T-cell (primary cell): ENCODE measurements at regions of chr1 and their contacts with region 1.

Region 1: DNA sequence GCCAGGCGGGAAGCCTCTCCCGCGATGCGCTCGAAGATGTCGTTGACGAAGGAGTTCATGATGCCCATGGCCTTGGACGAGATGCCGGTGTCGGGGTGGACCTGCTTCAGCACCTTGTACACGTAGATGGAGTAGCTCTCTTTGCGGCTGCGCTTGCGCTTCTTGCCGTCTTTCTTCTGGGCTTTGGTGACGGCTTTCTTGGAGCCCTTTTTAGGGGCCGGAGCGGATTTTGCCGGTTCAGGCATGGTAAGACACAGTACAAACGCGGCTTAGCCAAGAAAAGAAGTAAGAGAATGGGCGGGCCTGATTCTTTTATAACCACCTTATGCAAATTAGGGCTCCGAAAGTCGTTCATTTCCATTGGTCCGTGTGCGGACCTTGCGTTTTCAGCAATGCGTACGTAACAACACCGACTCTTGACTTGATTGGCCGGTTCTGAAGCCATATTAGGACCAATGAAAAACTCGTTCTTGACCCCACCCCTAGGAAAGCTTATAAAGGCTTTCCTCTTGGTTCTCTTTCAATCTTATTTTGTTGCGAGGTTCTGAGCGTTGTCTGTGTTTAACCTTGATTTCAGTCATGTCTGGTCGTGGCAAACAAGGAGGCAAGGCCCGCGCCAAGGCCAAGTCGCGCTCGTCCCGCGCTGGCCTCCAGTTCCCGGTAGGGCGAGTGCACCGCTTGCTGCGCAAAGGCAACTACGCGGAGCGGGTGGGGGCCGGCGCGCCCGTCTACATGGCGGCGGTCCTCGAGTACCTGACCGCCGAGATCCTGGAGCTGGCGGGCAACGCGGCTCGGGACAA is 12.8 kb upstream of the BOLA1 start:
- DNase-seq: peak; percentile 65 to 97 (median 86)
- ATAC-seq: peak; percentile 69 to 76 (median 74)
- H3K4me3 ChIP-seq: peak overlapping the region; percentile 78 to 94
- H3K4me3 Mint-ChIP-seq: no peak overlapping the region
- H3K27ac ChIP-seq: peak overlapping the region; percentile 97
- H3K27ac Mint-ChIP-seq: no peak overlapping the region
- H3K4me1 ChIP-seq: peaks cover 17 to 35% of the 10 kb centered on the region in 2 experiments
- H3K4me1 Mint-ChIP-seq: peaks cover 10 to 12% (median 11%) of the 10 kb centered on the region in 3 donors
- H3K27me3 ChIP-seq: no peaks in the 10 kb centered on the region
- H3K27me3 Mint-ChIP-seq: no peaks in the 10 kb centered on the region

Region 2: GRCh38 chr1:149849947-149850360 is 36.6 kb before region 1 on chr1:
- CTCF ChIA-PET with region 1: interaction called in 1 of 2 experiments, 11 read pairs
- POLR2A ChIA-PET with region 1: interaction called, 13 to 56 read pairs
- DNase-seq: peak in 4 of 35 experiments; percentile 4 to 42 (median 14)
- ATAC-seq: peak in 1 of 4 experiments; percentile 0
- H3K4me3 ChIP-seq: peak overlapping the region; percentile 63 to 75
- H3K4me3 Mint-ChIP-seq: peak overlapping the region; percentile 85 to 92 (median 86)
- H3K27ac ChIP-seq: peak overlapping the region; percentile 72
- H3K27ac Mint-ChIP-seq: peak overlapping the region; percentile 85 to 91
- H3K4me1 ChIP-seq: peaks cover 20 to 46% of the 10 kb centered on the region in 2 experiments
- H3K4me1 Mint-ChIP-seq: peaks cover 46 to 49% (median 49%) of the 10 kb centered on the region in 3 donors
- H3K27me3 ChIP-seq: no peaks in the 10 kb centered on the region
- H3K27me3 Mint-ChIP-seq: no peaks in the 10 kb centered on the region

Region 3: GRCh38 chr1:149927503-149928387 is 41.1 kb after region 1 on chr1 and contains the start of gene SF3B4:
- CTCF ChIA-PET with region 1: interaction called in 1 of 2 experiments, 7 read pairs
- POLR2A ChIA-PET with region 1: interaction called, 11 to 45 read pairs
- DNase-seq: peak; percentile 87 to 98 (median 96)
- ATAC-seq: peak; percentile 96 to 99 (median 97)
- H3K4me3 ChIP-seq: peak within 1 kb of the TSS; percentile 95 to 96
- H3K4me3 Mint-ChIP-seq: peak within 1 kb of the TSS; percentile 94 to 97 (median 97)
- H3K27ac ChIP-seq: peak within 1 kb of the TSS; percentile 96
- H3K27ac Mint-ChIP-seq: peak within 1 kb of the TSS; percentile 95 to 96
- H3K4me1 ChIP-seq: peaks cover 17 to 29% of the 10 kb centered on the region in 2 experiments
- H3K4me1 Mint-ChIP-seq: peaks cover 46 to 55% (median 51%) of the 10 kb centered on the region in 3 donors
- H3K27me3 ChIP-seq: no peaks in the 10 kb centered on the region
- H3K27me3 Mint-ChIP-seq: peaks cover 0 to 2% of the 10 kb centered on the region in 2 donors
- total RNA-seq, gene SF3B4: 45.3 to 54.6 (median 51.6) TPM

Region 4: DNA sequence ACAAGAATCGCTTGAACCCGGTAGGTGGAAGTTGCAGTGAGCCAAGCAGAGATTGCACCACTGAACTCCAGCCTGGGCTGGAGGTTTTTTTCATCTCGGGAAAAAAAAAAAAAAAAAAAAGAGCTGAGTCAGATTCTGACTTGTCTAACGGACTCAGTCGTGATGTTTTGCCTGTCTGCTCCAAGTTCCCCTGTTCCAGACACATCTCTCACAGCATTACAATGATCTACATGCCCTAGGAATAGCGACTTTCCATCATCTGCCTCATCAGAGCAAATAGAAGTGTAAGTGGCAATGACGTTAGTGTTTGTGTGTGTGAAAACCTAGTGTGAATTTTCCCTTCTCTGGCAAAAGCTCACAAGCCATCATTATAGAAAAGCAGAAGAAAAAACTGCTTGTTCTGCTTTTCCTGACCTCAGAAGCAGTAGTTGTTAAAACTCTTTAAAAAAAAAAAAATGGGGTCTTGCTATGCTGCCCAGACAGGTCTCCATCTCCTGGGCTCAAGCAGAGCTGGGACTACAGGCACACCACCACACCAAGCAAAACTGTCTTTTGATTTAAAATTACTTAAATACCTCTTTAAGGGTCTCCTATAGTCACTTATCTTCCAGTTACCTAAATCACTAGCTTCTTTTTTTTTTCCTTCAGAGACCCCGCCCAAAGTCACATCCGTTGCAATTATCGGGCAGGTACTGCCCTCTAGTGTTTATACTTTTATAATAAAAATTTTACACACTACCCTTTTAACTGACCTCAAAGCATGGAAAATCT is 300.4 kb after region 1 on chr1:
- CTCF ChIA-PET with region 1: interaction called in 1 of 2 experiments, 21 read pairs
- POLR2A ChIA-PET with region 1: interaction called in 1 of 2 experiments, 11 read pairs
- DNase-seq: peak in 17 of 35 experiments; percentile 1 to 72 (median 13)
- ATAC-seq: peak; percentile 75 to 88 (median 77)
- H3K4me3 ChIP-seq: no peak overlapping the region
- H3K4me3 Mint-ChIP-seq: peak overlapping the region in 1 of 3 donors; percentile 17
- H3K27ac ChIP-seq: no peak overlapping the region
- H3K27ac Mint-ChIP-seq: peak overlapping the region in 1 of 2 donors; percentile 23
- H3K4me1 ChIP-seq: peaks cover 2 to 13% of the 10 kb centered on the region in 2 experiments
- H3K4me1 Mint-ChIP-seq: peaks cover 0 to 11% (median 9%) of the 10 kb centered on the region in 3 donors
- H3K27me3 ChIP-seq: peaks cover 0 to 3% of the 10 kb centered on the region in 2 experiments
- H3K27me3 Mint-ChIP-seq: peaks cover 0 to 3% of the 10 kb centered on the region in 2 donors

Region 5: GRCh38 chr1:150227228-150227627 is 340.6 kb after region 1 on chr1:
- CTCF ChIA-PET with region 1: no interaction called
- POLR2A ChIA-PET with region 1: no interaction called
- DNase-seq: no peak
- ATAC-seq: no peak
- H3K4me3 ChIP-seq: no peak overlapping the region
- H3K4me3 Mint-ChIP-seq: no peak overlapping the region
- H3K27ac ChIP-seq: no peak overlapping the region
- H3K27ac Mint-ChIP-seq: no peak overlapping the region
- H3K4me1 ChIP-seq: no peaks in the 10 kb centered on the region
- H3K4me1 Mint-ChIP-seq: peaks cover 0 to 3% (median 0%) of the 10 kb centered on the region in 3 donors
- H3K27me3 ChIP-seq: no peaks in the 10 kb centered on the region
- H3K27me3 Mint-ChIP-seq: no peaks in the 10 kb centered on the region